AG04450 (cell line): ENCODE measurements at regions of chr2 and their contacts with region 1.

Region 1: GRCh38 chr2:178796079-178796677 is 11.0 kb downstream of the TTN start:
- DNase-seq: peak; percentile 4
- H3K4me3 ChIP-seq: no peak overlapping the region
- H3K27ac ChIP-seq: no peak overlapping the region
- H3K27me3 ChIP-seq: no peaks in the 10 kb centered on the region
- CTCF ChIP-seq: peak; percentile 60

Region 2: DNA sequence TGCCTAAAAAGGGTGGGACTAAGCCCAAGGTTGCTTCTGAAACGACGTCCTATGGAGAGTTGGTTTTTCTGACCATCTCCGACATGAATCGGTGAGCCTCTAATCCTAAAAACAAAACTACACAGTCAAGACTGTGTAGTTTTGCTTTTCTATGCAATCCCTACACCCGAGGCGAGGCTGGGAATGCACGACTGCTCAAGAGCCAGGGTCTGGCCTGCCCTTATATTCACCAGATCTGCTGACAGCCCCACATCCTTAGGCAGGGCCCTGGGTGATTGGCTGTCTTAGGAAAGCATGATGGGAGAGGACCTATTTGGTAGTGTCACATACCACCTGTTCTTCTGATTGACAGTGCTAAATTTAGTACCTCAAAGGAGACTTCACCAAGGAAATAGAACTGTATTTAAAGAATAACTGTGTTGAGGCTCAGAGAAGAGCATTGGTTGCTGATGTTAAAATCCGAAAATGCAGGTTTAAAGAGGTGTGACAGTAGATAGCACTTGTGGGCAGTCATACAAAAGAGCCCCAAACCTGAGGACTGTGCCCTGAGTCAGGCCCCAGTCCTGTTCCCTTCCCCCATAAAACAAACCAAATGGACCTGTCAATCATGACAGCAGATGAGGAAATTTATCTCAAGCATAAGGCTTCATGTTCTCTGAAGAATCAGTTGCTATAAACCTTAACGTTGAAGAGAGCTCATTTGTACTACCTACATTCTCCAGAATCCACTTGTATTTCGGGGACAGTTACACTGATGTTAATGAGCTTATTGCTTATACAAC is 11.2 kb after region 1 on chr2 and contains the start of gene TTN:
- CTCF ChIA-PET with region 1: interaction called, 12 read pairs
- POLR2A ChIA-PET with region 1: no interaction called
- DNase-seq: no peak
- H3K4me3 ChIP-seq: no peak within 1 kb of the TSS
- H3K27ac ChIP-seq: no peak within 1 kb of the TSS
- H3K27me3 ChIP-seq: no peaks in the 10 kb centered on the region
- CTCF ChIP-seq: no peak
- polyA plus RNA-seq, gene TTN: 0.06 and 0.07 TPM in 2 replicates

Region 3: DNA sequence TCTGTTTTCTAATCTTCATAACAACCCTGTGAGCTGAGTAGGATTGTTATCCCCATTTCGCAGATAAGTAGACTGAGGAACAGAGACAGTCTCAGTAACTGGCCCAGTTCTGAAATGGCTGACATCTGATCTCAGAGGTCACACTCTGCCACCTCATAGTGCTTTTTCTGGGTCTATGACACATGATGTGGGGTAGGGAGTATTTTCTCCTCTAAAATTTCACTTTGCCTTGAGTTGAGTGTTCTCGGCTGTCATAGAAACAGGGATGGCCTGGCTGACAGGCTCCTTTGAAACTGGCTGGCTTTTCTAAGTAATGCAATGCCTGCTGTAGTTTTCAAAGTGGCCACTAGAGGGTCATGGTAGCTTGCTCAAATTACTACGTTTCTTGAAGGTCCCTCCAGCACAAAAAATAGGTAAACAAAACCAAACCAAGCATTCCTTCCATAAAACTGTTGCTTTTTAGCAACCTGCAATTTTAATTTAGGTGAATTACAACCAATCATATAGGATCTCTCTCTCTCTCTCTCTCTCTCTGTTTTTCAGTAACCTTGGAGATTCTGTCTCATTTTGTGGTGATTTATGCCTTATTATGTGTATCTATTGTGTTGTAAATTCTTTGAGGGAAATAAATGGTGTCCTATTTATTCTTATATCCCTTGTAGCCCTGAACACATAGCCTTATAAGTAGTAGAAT is 95.2 kb after region 1 on chr2:
- CTCF ChIA-PET with region 1: interaction called, 13 read pairs
- POLR2A ChIA-PET with region 1: no interaction called
- DNase-seq: peak; percentile 37
- H3K4me3 ChIP-seq: no peak overlapping the region
- H3K27ac ChIP-seq: no peak overlapping the region
- H3K27me3 ChIP-seq: no peaks in the 10 kb centered on the region
- CTCF ChIP-seq: peak; percentile 98

Region 4: DNA sequence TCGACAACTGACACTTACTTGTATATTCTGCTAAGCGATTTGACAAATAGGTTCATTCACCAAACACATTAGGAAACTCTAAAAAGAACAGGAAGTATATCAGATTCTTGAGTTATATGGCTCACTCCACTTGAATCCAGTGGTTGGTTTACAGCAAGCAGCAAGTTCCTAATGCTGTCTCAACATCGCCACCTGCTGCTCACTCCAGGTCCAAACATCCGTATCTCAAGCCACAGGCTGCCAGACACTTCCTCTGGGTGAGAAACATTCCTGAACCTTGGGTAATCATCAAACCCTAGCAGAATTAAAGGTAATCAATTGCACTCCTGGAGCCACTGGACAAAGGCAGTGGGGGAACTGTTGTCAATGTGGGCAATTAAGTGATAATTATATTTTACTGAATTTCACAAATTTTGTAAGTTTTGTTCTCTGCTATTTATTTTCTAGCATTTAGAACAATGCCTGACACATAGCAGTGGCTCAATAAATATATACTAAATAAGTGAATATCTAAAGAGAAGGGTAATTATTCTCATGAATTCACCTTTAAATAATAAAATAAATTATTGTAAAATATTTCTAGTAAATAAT is 118.2 kb after region 1 on chr2:
- CTCF ChIA-PET with region 1: interaction called, 69 read pairs
- POLR2A ChIA-PET with region 1: no interaction called
- DNase-seq: peak; percentile 66
- H3K4me3 ChIP-seq: no peak overlapping the region
- H3K27ac ChIP-seq: no peak overlapping the region
- H3K27me3 ChIP-seq: no peaks in the 10 kb centered on the region
- CTCF ChIP-seq: peak; percentile 91

Region 5: GRCh38 chr2:179129574-179130238 is 333.5 kb after region 1 on chr2:
- CTCF ChIA-PET with region 1: interaction called, 22 read pairs
- POLR2A ChIA-PET with region 1: no interaction called
- DNase-seq: no peak
- H3K4me3 ChIP-seq: no peak overlapping the region
- H3K27ac ChIP-seq: no peak overlapping the region
- H3K27me3 ChIP-seq: no peaks in the 10 kb centered on the region
- CTCF ChIP-seq: peak; percentile 60